ENCODE measurements at regions of chr1 and their contacts with region 1.

Region 1: GRCh38 chr1:193019442-193020026 is 39.6 kb downstream of the UCHL5 start:
- ATAC-seq: peak in 4 of 8 experiments; percentile 34 to 66 (median 58)
- H3K4me3 ChIP-seq: no peak overlapping the region
- H3K27ac ChIP-seq: no peak overlapping the region
- H3K4me1 ChIP-seq: no peaks in the 10 kb centered on the region

Region 2: GRCh38 chr1:192808518-192809306 is 210.8 kb before region 1 on chr1 and contains the start of gene RGS2:
- in situ Hi-C with region 1: loop called in 4 of 9 experiments (anchors 10 to 25 kb)
- ATAC-seq: peak; percentile 87 to 97 (median 95)
- H3K4me3 ChIP-seq: peak within 1 kb of the TSS; percentile 57 to 85 (median 74)
- H3K27ac ChIP-seq: peak within 1 kb of the TSS; percentile 74 to 85
- H3K4me1 ChIP-seq: peaks cover 12 to 15% of the 10 kb centered on the region in 2 donors
- total RNA-seq, gene RGS2: 8.5 to 93.9 (median 50.1) TPM

Region 3: GRCh38 chr1:192826791-192827477 is 192.6 kb before region 1 on chr1:
- in situ Hi-C with region 1: loop called in 4 of 9 experiments (anchors 25 kb)
- ATAC-seq: peak in 7 of 8 experiments; percentile 26 to 95 (median 63)
- H3K4me3 ChIP-seq: no peak overlapping the region
- H3K27ac ChIP-seq: no peak overlapping the region
- H3K4me1 ChIP-seq: peaks cover 11 to 16% of the 10 kb centered on the region in 2 donors

Measured in motor neuron (in vitro differentiated cells).